ENCODE measurements at regions of chr3 and their contacts with region 1.

Region 1: DNA sequence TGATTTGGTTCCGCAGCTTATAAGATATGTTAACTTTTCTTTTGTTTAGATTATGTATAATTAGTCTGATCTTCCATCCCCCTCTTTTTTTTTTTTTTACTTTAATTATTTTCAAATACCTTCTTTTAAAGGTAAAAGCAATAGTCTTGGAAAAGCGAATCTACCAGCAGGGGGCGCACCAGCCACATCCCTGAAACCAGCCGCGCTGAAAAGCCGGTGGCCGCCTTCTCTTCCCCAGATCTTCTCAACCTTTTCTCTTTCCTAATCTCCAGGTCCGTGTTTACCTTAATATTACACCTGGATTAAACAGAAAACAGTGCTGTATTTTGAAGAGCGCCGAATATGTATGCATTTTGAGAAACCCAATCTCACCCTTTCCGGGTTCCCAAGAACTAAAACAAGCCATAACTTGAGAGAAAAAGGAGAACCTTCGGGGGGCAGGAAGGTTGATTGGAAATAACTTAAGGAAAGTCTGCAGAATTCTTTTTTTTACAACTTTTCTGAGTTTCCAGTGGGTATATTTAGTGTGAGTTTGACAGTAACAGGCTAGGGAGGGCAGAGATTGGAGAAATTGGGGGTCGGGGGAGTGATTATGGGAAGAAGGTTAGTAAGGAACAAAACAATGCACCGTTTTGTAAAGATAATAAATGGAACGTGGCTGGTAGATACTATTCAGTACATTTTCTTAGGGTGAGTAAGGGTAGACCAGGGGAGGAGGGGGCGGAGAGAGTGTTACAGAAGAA is 2.0 kb upstream of the SOX2 start:
- DNase-seq: peak; percentile 85 to 90
- H3K4me3 ChIP-seq: peak overlapping the region in 2 of 4 donors; percentile 4 to 15
- H3K27ac ChIP-seq: no peak overlapping the region
- H3K4me1 ChIP-seq: peaks cover 6 to 47% (median 36%) of the 10 kb centered on the region in 4 donors
- H3K27me3 ChIP-seq: peaks cover 25 to 100% (median 60%) of the 10 kb centered on the region in 3 donors
- CTCF ChIP-seq: peak in 5 of 7 experiments; percentile 50 to 89 (median 77)
- EP300 ChIP-seq: no peak
- POLR2A ChIP-seq: no peak

Region 2: GRCh38 chr3:181458857-181459256 is 250.9 kb before region 1 on chr3:
- intact Hi-C with region 1: no loop called
- DNase-seq: peak in 1 of 2 donors; percentile 26
- H3K4me3 ChIP-seq: no peak overlapping the region
- H3K27ac ChIP-seq: no peak overlapping the region
- H3K4me1 ChIP-seq: no peaks in the 10 kb centered on the region
- H3K27me3 ChIP-seq: no peaks in the 10 kb centered on the region
- CTCF ChIP-seq: no peak
- EP300 ChIP-seq: no peak
- POLR2A ChIP-seq: no peak

Region 3: DNA sequence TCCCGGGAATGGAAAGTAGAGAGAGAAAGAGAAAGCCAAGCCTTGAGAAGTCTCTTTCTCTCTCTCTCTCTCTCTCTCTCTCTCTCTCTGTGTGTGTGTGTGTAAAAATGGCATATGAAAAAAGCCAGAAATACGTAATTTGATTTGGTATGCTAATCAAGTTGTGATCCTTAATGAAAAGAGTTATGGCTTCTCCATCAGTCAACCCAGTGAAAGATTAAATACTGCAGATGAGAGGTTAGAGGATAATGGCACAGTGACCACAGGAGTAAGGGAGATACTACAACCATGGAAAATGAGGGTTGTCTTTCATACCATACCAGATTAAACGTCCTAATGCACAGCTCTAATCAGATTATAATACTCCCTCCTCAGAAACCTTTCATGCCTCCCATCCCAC is 191.5 kb before region 1 on chr3:
- intact Hi-C with region 1: no loop called
- DNase-seq: no peak
- H3K4me3 ChIP-seq: no peak overlapping the region
- H3K27ac ChIP-seq: no peak overlapping the region
- H3K4me1 ChIP-seq: no peaks in the 10 kb centered on the region
- H3K27me3 ChIP-seq: no peaks in the 10 kb centered on the region
- CTCF ChIP-seq: no peak
- EP300 ChIP-seq: no peak
- POLR2A ChIP-seq: no peak

Region 4: GRCh38 chr3:181756645-181757297 is 47.1 kb after region 1 on chr3:
- intact Hi-C with region 1: no loop called
- DNase-seq: no peak
- H3K4me3 ChIP-seq: no peak overlapping the region
- H3K27ac ChIP-seq: no peak overlapping the region
- H3K4me1 ChIP-seq: no peaks in the 10 kb centered on the region
- H3K27me3 ChIP-seq: peaks cover 0 to 14% (median 0%) of the 10 kb centered on the region in 3 donors
- CTCF ChIP-seq: no peak
- EP300 ChIP-seq: no peak
- POLR2A ChIP-seq: no peak

Region 5: GRCh38 chr3:181773921-181774320 is 64.2 kb after region 1 on chr3:
- intact Hi-C with region 1: no loop called
- DNase-seq: no peak
- H3K4me3 ChIP-seq: no peak overlapping the region
- H3K27ac ChIP-seq: no peak overlapping the region
- H3K4me1 ChIP-seq: no peaks in the 10 kb centered on the region
- H3K27me3 ChIP-seq: no peaks in the 10 kb centered on the region
- CTCF ChIP-seq: no peak
- EP300 ChIP-seq: no peak
- POLR2A ChIP-seq: no peak

Region 6: DNA sequence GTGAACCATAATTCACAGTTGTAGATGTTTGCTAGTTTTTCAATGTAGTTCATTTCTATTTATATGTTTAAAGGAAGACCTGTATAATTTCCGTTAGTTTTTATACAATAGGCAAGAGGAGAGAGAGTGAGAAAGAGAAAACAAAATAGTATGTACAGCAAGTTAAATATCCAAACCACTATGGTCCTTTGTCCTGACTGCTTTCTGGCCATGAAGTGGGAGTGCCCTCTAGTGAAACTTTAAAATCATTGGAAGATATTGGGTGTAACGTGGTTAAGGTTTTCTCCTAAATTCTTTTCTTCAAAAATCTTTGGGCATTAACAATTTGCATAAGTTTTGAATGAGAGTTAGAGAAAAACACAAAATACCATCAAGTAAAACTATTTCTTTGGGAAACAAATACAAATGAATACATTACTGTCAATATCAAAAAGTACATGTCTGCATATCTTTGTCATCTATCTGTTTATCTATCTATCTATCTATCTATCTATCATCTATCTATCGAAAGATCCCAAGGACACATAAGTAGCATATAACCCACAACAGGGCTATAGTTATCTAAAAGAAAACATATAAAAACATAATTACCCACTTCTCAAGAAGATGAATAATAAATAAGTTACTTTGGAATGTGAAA is 549.0 kb after region 1 on chr3:
- intact Hi-C with region 1: loop called (anchors 10 kb)
- DNase-seq: peak in 1 of 2 donors; percentile 85
- H3K4me3 ChIP-seq: no peak overlapping the region
- H3K27ac ChIP-seq: no peak overlapping the region
- H3K4me1 ChIP-seq: no peaks in the 10 kb centered on the region
- H3K27me3 ChIP-seq: peaks cover 0 to 15% (median 0%) of the 10 kb centered on the region in 3 donors
- CTCF ChIP-seq: peak in 4 of 7 experiments; percentile 23 to 65 (median 48)
- EP300 ChIP-seq: no peak
- POLR2A ChIP-seq: no peak

Region 7: DNA sequence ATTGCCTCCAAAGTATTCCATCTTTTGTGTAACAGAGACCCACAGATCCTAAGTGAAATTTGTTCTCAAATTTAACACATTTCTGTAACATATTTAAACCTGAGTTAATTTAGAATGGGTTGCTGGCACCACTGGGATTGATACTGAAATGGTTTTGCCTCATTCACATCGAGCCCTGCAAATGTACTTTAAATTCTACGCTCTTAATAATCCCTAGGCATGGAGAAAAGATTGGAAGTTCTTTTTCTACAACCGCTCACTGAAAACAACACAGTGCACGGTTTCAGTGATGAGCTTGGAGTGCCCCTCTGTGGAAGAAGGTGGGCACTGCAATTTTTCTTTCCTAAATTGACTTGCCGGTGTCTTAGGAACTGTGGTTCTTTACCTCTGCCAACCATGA is 973.7 kb after region 1 on chr3:
- intact Hi-C with region 1: loop called (anchors 5 kb)
- DNase-seq: peak; percentile 77 to 91
- H3K4me3 ChIP-seq: peak overlapping the region; percentile 56 to 62 (median 59)
- H3K27ac ChIP-seq: peak overlapping the region in 4 of 5 donors; percentile 74 to 85 (median 78)
- H3K4me1 ChIP-seq: peaks cover 10 to 21% (median 18%) of the 10 kb centered on the region in 4 donors
- H3K27me3 ChIP-seq: peaks cover 0 to 17% (median 8%) of the 10 kb centered on the region in 3 donors
- CTCF ChIP-seq: peak in 5 of 7 experiments; percentile 75 to 88 (median 82)
- EP300 ChIP-seq: no peak
- POLR2A ChIP-seq: no peak